HEK293T (cell line): ENCODE measurements at regions of chr17 and their contacts with region 1.

Region 1: GRCh38 chr17:8138672-8139371 is 13.4 kb downstream of the PER1 start:
- DNase-seq: peak; percentile 89

Region 2: GRCh38 chr17:8151123-8151640 is 12.4 kb after region 1 on chr17:
- CTCF ChIA-PET with region 1: interaction called, 3 read pairs
- POLR2A ChIA-PET with region 1: interaction called, 53 read pairs
- DNase-seq: peak; percentile 67

Region 3: GRCh38 chr17:8156246-8156992 is 17.6 kb after region 1 on chr17:
- CTCF ChIA-PET with region 1: interaction called, 3 read pairs
- POLR2A ChIA-PET with region 1: interaction called, 53 read pairs
- DNase-seq: peak; percentile 90